ENCODE measurements at regions of chr2 and their contacts with region 1.

Region 1: GRCh38 chr2:20190876-20191713 is 33.8 kb downstream of the SDC1 start:
- DNase-seq: peak; percentile 61
- H3K4me3 Mint-ChIP-seq: no peak overlapping the region
- H3K27ac Mint-ChIP-seq: no peak overlapping the region
- H3K4me1 Mint-ChIP-seq: no peaks in the 10 kb centered on the region
- H3K27me3 Mint-ChIP-seq: no peaks in the 10 kb centered on the region
- CTCF ChIP-seq: peak; percentile 39

Region 2: GRCh38 chr2:20135631-20136050 is 55.5 kb before region 1 on chr2:
- CTCF ChIA-PET with region 1: interaction called, 6 read pairs
- POLR2A ChIA-PET with region 1: interaction called, 3 read pairs
- intact Hi-C with region 1: loop called (anchors 1 kb)
- DNase-seq: peak; percentile 68
- H3K4me3 Mint-ChIP-seq: no peak overlapping the region
- H3K27ac Mint-ChIP-seq: no peak overlapping the region
- H3K4me1 Mint-ChIP-seq: peaks cover 21% of the 10 kb centered on the region
- H3K27me3 Mint-ChIP-seq: no peaks in the 10 kb centered on the region
- CTCF ChIP-seq: peak; percentile 72

Region 3: DNA sequence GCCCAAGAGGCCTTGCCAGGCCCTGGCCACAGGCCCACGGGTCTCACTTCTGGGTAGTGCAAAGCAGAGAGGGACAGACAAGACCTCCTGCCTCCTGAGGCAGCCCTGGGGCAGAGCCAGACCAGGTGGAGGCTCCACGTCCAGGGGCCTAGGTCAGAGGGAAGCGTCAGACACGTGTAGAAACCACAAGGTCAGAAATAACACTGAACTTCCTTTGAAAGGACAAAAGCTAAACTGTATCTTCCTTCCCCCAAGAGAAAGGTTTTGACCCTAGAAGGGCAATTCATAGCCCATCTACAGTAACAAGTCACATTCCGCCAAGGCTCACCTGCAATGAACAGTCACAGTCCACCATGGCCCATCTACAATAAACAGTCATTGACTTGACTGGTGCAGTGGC is 16.0 kb after region 1 on chr2:
- CTCF ChIA-PET with region 1: interaction called, 21 read pairs
- POLR2A ChIA-PET with region 1: interaction called, 5 read pairs
- intact Hi-C with region 1: no loop called
- DNase-seq: no peak
- H3K4me3 Mint-ChIP-seq: no peak overlapping the region
- H3K27ac Mint-ChIP-seq: peak overlapping the region; percentile 94
- H3K4me1 Mint-ChIP-seq: peaks cover 48% of the 10 kb centered on the region
- H3K27me3 Mint-ChIP-seq: no peaks in the 10 kb centered on the region
- CTCF ChIP-seq: no peak

Region 4: GRCh38 chr2:20698916-20699613 is 508.0 kb after region 1 on chr2:
- CTCF ChIA-PET with region 1: no interaction called
- POLR2A ChIA-PET with region 1: no interaction called
- intact Hi-C with region 1: no loop called
- DNase-seq: no peak
- H3K4me3 Mint-ChIP-seq: no peak overlapping the region
- H3K27ac Mint-ChIP-seq: no peak overlapping the region
- H3K4me1 Mint-ChIP-seq: no peaks in the 10 kb centered on the region
- H3K27me3 Mint-ChIP-seq: no peaks in the 10 kb centered on the region
- CTCF ChIP-seq: no peak